Transverse colon (tissue), 4 donors: ENCODE measurements at regions of chr4 and their contacts with region 1.

Region 1: GRCh38 chr4:22678940-22679854 is 13.5 kb upstream of the GBA3 start:
- DNase-seq: no peak
- H3K4me3 ChIP-seq: no peak overlapping the region
- H3K27ac ChIP-seq: peak overlapping the region in 3 of 4 donors; percentile 16 to 61 (median 59)
- H3K4me1 ChIP-seq: peaks cover 7 to 23% (median 12%) of the 10 kb centered on the region in 4 donors
- H3K27me3 ChIP-seq: no peaks in the 10 kb centered on the region
- CTCF ChIP-seq: no peak
- EP300 ChIP-seq: no peak
- POLR2A ChIP-seq: no peak

Region 2: DNA sequence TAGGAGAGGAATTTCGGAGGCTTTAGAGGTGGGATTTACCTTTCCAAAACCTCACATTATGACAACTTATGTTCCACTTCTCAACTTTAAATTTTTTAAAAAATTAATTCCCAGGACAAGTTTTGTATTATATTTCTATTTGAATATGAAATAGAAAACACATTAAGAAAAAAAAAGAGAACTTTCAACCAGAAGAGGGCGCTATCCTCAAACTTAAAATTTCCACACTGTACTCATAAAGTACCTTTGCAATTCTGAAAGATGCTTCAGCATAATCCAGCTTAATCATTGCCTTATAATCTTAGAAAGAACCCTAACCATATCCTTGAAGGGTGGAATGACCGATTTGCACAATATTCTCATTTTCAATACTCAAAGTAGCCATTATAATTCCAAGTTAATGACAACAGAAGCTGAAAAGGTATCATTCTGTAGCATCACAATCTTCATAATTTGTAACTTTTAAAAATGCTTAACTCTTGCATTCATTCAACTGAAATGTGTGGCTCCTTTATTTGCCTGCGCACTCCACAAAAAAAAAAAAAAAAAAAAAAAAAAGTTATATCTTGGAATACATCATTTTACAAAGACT is 888.7 kb before region 1 on chr4:
- in situ Hi-C with region 1: loop called in 3 of 4 experiments (anchors 25 kb)
- intact Hi-C with region 1: no loop called
- DNase-seq: no peak
- H3K4me3 ChIP-seq: no peak overlapping the region
- H3K27ac ChIP-seq: no peak overlapping the region
- H3K4me1 ChIP-seq: no peaks in the 10 kb centered on the region
- H3K27me3 ChIP-seq: no peaks in the 10 kb centered on the region
- CTCF ChIP-seq: peak; percentile 36 to 65 (median 49)
- EP300 ChIP-seq: no peak
- POLR2A ChIP-seq: no peak

Region 3: DNA sequence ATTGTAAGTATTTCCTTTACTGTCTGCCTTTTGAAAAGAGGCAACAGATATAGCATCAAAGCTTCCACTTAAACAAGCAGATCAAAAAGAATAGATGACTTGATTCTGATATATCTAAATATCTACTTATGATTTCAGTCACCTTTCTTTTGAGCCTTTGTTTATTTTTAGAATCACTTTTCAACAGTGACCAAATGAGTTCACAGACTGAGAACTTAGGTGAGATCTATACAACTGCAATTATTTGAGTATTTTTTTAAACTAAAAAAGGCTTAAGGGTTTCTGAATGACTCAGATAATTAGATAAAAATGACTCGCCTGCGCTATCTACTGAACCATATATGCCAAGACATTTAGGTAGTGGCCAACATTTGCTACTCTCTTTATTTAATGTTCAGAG is 563.9 kb before region 1 on chr4:
- in situ Hi-C with region 1: no loop called
- intact Hi-C with region 1: no loop called
- DNase-seq: no peak
- H3K4me3 ChIP-seq: no peak overlapping the region
- H3K27ac ChIP-seq: no peak overlapping the region
- H3K4me1 ChIP-seq: no peaks in the 10 kb centered on the region
- H3K27me3 ChIP-seq: no peaks in the 10 kb centered on the region
- CTCF ChIP-seq: no peak
- EP300 ChIP-seq: no peak
- POLR2A ChIP-seq: no peak

Region 4: GRCh38 chr4:22323691-22324090 is 355.5 kb before region 1 on chr4:
- in situ Hi-C with region 1: no loop called
- intact Hi-C with region 1: no loop called
- DNase-seq: no peak
- H3K4me3 ChIP-seq: no peak overlapping the region
- H3K27ac ChIP-seq: no peak overlapping the region
- H3K4me1 ChIP-seq: no peaks in the 10 kb centered on the region
- H3K27me3 ChIP-seq: no peaks in the 10 kb centered on the region
- CTCF ChIP-seq: no peak
- EP300 ChIP-seq: no peak
- POLR2A ChIP-seq: no peak